B cell (primary cell): ENCODE measurements at regions of chr16 and their contacts with region 1.

Region 1: DNA sequence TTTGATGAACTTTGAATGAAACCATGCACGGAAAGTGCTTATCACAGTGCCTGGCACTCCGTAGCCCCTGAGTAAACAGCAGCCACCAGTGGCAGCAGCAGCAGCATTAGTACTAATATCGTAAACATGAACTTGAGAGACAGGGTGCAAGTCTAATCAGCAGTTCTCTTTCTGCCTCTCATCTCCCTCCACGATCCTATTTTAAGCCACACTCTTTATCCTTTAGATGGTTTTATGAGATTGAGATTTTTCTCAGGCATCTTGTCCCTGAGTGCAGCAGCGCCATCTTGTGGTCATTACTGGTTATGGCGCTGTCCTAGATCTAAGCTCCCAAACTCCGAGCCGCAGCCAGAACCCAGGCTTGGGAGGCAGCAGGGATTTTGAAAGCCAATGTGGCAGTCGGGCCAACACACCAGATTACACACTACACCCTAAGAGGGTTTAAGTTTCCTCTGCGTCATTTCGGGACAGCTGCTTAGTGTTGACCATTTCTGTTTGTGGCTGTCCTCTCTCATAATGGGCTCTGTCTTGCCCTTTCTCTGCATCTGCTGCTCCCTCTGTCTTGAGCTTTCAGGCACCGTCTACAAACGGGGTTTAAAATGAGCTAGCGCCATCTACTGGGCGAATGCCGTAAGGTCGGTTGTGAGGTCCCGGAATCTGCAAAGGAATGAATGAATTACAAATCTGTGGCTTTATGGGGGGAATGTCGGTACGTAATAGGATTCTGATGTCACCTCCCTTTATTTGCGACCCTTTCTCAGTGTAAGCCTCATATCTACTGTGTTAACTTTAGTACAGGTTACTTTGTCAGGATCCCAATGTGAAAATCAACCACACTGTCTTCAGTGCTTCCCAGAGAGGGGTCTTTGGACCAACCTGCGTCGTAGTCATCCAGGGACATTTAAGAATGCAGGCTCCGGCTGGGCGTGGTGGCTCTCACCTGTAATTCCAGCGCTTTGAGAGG is 64.5 kb downstream of the CYLD start:
- DNase-seq: peak; percentile 92
- ATAC-seq: peak; percentile 93
- H3K4me3 ChIP-seq: peak overlapping the region in 4 of 5 experiments; percentile 19 to 53 (median 44)
- H3K4me3 Mint-ChIP-seq: peak overlapping the region; percentile 81
- H3K27ac ChIP-seq: no peak overlapping the region
- H3K27ac Mint-ChIP-seq: peak overlapping the region; percentile 79
- H3K4me1 ChIP-seq: peaks cover 11 to 15% of the 10 kb centered on the region in 2 donors
- H3K4me1 Mint-ChIP-seq: peaks cover 20% of the 10 kb centered on the region
- H3K27me3 ChIP-seq: no peaks in the 10 kb centered on the region
- H3K27me3 Mint-ChIP-seq: peaks cover 15% of the 10 kb centered on the region
- CTCF ChIP-seq: peak; percentile 96

Region 2: DNA sequence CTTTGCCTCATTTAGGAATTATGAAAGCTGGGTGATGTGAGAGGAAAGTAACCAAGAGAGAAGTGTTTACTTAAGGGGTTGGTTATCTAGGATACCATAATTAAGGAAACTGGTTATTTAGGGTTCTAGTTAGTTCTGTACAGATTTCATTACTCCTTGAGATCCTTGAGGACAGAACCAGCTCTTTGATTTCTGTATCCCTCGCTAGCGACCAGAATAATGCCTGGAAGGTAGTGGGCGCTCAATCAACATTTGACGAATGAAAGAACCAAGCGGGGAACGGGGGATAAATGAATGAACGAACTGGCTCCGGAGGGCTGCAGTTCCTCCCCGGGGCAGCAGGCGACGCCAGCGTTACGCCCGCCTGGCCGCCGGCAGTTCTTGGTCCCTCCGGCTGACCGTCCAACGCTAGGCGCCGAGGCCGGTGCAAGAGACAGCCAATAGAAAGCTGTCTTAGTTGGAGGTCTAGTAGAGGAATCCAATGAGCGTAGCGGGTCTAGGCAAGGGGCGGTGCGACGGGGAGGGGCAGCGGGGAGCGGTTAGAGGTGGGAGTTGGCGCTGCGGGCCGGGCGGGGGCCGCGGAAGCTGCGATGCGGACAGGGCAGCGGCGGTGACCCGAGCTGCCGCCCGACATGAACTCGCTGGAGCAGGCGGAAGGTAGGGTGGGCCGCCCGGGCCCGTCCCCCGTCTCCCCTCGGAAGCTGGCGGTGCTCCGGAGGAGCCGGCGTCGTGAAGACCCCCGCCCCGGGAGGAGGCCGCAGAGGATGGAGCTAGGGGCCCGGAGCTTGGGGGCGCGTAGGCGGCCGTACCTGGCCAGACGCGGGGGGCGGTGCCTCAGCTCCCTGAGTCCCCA is 781.5 kb before region 1 on chr16 and contains the start of gene CNEP1R1:
- CTCF ChIA-PET with region 1: interaction called, 25 read pairs
- POLR2A ChIA-PET with region 1: no interaction called
- intact Hi-C with region 1: loop called (anchors 1 kb)
- DNase-seq: peak; percentile 98
- ATAC-seq: peak; percentile 94
- H3K4me3 ChIP-seq: peak within 1 kb of the TSS; percentile 87 to 93 (median 92)
- H3K4me3 Mint-ChIP-seq: peak within 1 kb of the TSS; percentile 93
- H3K27ac ChIP-seq: peak within 1 kb of the TSS; percentile 31 to 78
- H3K27ac Mint-ChIP-seq: peak within 1 kb of the TSS; percentile 89
- H3K4me1 ChIP-seq: peaks cover 12 to 14% of the 10 kb centered on the region in 2 donors
- H3K4me1 Mint-ChIP-seq: peaks cover 23% of the 10 kb centered on the region
- H3K27me3 ChIP-seq: no peaks in the 10 kb centered on the region
- H3K27me3 Mint-ChIP-seq: peaks cover 7% of the 10 kb centered on the region
- CTCF ChIP-seq: peak; percentile 100
- total RNA-seq, gene CNEP1R1: 32.9 and 36.9 TPM in 2 replicates

Region 3: DNA sequence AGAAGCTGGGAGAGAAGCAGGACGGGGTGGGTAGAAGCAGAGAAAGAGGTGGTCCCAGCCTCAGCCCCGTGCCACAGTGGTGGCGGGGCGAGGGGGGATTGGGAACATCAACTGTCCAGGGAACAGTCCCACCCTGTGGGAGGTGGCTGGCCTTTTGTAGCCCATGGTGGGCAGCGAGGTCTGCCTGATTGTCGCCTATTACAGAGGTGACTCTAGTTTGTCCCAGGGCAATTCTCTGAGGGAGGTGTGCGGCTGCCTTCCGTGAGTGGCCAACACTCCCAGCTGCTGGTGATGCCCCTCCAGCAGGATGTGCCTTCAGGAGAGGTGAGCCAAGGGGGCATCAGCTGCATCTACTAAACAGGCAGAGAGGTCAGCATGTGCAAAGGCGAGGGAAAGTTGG is 432.6 kb before region 1 on chr16:
- CTCF ChIA-PET with region 1: interaction called, 3 read pairs
- POLR2A ChIA-PET with region 1: no interaction called
- intact Hi-C with region 1: loop called (anchors 2 kb)
- DNase-seq: no peak
- ATAC-seq: no peak
- H3K4me3 ChIP-seq: no peak overlapping the region
- H3K4me3 Mint-ChIP-seq: no peak overlapping the region
- H3K27ac ChIP-seq: no peak overlapping the region
- H3K27ac Mint-ChIP-seq: no peak overlapping the region
- H3K4me1 ChIP-seq: peaks cover 4 to 5% of the 10 kb centered on the region in 2 donors
- H3K4me1 Mint-ChIP-seq: peaks cover 7% of the 10 kb centered on the region
- H3K27me3 ChIP-seq: peaks cover 0 to 7% (median 0%) of the 10 kb centered on the region in 4 experiments
- H3K27me3 Mint-ChIP-seq: peaks cover 20% of the 10 kb centered on the region
- CTCF ChIP-seq: no peak

Region 4: GRCh38 chr16:50497592-50497991 is 308.8 kb before region 1 on chr16:
- CTCF ChIA-PET with region 1: no interaction called
- POLR2A ChIA-PET with region 1: no interaction called
- intact Hi-C with region 1: no loop called
- DNase-seq: no peak
- ATAC-seq: no peak
- H3K4me3 ChIP-seq: no peak overlapping the region
- H3K4me3 Mint-ChIP-seq: no peak overlapping the region
- H3K27ac ChIP-seq: no peak overlapping the region
- H3K27ac Mint-ChIP-seq: no peak overlapping the region
- H3K4me1 ChIP-seq: no peaks in the 10 kb centered on the region
- H3K4me1 Mint-ChIP-seq: no peaks in the 10 kb centered on the region
- H3K27me3 ChIP-seq: no peaks in the 10 kb centered on the region
- H3K27me3 Mint-ChIP-seq: peaks cover 25% of the 10 kb centered on the region
- CTCF ChIP-seq: no peak

Region 5: DNA sequence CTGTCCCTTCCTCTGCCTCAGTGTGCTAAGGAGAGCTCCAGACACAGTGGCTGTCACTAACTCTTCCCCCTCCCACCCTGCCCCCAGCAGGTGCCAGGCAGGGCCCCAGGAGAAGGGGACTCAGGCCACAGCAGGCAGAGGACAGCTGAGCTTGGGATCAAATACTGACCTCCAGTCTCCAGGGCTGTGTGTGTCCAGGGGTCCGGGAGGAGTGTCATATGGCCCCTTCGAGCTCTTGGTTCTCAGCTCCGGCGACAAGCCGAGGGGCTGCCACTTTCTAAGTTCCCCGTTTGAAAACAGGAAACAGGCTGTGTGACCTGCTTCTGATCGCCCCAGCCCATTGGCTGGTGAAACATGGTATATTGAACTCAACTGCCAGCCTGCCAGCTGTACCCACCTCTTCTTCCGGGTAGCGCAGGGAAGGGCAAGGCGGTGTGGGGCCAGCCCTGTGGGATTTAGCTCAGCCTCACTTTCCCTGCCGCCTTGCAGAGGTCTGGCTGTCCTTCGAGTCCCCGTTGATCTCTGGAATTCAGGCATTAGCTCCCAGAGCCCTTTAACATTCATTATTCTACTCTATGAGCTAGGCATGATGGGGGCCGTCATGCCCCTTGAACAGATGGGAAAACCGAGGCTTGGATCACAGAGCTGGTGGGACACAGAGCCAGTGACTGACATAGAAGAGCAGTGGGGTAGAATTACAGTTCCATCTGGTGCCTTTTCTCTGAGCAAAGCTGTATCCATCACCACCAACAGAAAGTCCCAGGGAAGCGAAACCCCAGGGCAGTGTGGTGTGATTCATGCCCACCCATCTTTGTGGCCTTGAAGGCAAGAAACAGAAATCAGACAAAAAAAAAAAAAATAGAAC is 125.1 kb before region 1 on chr16 and contains the start of gene SNX20:
- CTCF ChIA-PET with region 1: interaction called, 13 read pairs
- POLR2A ChIA-PET with region 1: interaction called, 4 read pairs
- intact Hi-C with region 1: no loop called
- DNase-seq: peak; percentile 81
- ATAC-seq: peak; percentile 76
- H3K4me3 ChIP-seq: peak within 1 kb of the TSS; percentile 76 to 96 (median 93)
- H3K4me3 Mint-ChIP-seq: peak within 1 kb of the TSS; percentile 93
- H3K27ac ChIP-seq: peak within 1 kb of the TSS; percentile 92 to 95
- H3K27ac Mint-ChIP-seq: peak within 1 kb of the TSS; percentile 98
- H3K4me1 ChIP-seq: peaks cover 74 to 76% of the 10 kb centered on the region in 2 donors
- H3K4me1 Mint-ChIP-seq: peaks cover 73% of the 10 kb centered on the region
- H3K27me3 ChIP-seq: no peaks in the 10 kb centered on the region
- H3K27me3 Mint-ChIP-seq: no peaks in the 10 kb centered on the region
- CTCF ChIP-seq: no peak
- total RNA-seq, gene SNX20: 43.0 and 47.7 TPM in 2 replicates

Region 6: GRCh38 chr16:50747207-50747956 is 59.0 kb before region 1 on chr16:
- CTCF ChIA-PET with region 1: interaction called, 18 read pairs
- POLR2A ChIA-PET with region 1: no interaction called
- intact Hi-C with region 1: loop called (anchors 1 kb)
- DNase-seq: peak; percentile 60
- ATAC-seq: peak; percentile 61
- H3K4me3 ChIP-seq: no peak overlapping the region
- H3K4me3 Mint-ChIP-seq: peak overlapping the region; percentile 74
- H3K27ac ChIP-seq: peak overlapping the region in 1 of 2 donors; percentile 58
- H3K27ac Mint-ChIP-seq: peak overlapping the region; percentile 59
- H3K4me1 ChIP-seq: peaks cover 33 to 39% of the 10 kb centered on the region in 2 donors
- H3K4me1 Mint-ChIP-seq: peaks cover 55% of the 10 kb centered on the region
- H3K27me3 ChIP-seq: no peaks in the 10 kb centered on the region
- H3K27me3 Mint-ChIP-seq: no peaks in the 10 kb centered on the region
- CTCF ChIP-seq: peak; percentile 74

Region 7: DNA sequence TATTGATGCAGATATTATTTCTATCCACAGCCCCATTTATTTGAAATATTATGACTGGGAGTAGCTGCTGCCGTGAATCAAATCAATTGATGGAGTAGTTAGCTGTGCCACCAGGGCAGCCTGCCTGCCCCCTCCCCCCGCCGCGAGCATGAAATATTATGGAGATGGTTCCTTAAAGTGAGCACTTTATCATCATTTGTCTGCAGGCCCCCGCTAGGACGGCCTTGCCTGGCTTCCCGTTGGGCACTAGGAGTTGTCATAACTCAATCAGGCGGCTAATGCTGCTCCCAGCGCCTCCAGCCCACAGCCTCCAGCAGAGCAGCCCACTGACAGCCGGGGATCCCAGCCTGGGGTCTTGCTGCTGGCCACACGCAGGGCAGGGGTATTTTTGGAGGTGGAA is 170.8 kb after region 1 on chr16:
- CTCF ChIA-PET with region 1: no interaction called
- POLR2A ChIA-PET with region 1: no interaction called
- intact Hi-C with region 1: no loop called
- DNase-seq: no peak
- ATAC-seq: no peak
- H3K4me3 ChIP-seq: no peak overlapping the region
- H3K4me3 Mint-ChIP-seq: no peak overlapping the region
- H3K27ac ChIP-seq: no peak overlapping the region
- H3K27ac Mint-ChIP-seq: no peak overlapping the region
- H3K4me1 ChIP-seq: no peaks in the 10 kb centered on the region
- H3K4me1 Mint-ChIP-seq: peaks cover 5% of the 10 kb centered on the region
- H3K27me3 ChIP-seq: no peaks in the 10 kb centered on the region
- H3K27me3 Mint-ChIP-seq: peaks cover 12% of the 10 kb centered on the region
- CTCF ChIP-seq: no peak